ENCODE measurements at regions of chr11 and their contacts with region 1.

Region 1: GRCh38 chr11:13343931-13344717 is 66.5 kb downstream of the BMAL1 start:
- DNase-seq: peak in 1 of 2 donors; percentile 83
- H3K4me3 ChIP-seq: no peak overlapping the region
- H3K27ac ChIP-seq: no peak overlapping the region
- H3K4me1 ChIP-seq: peaks cover 0 to 5% of the 10 kb centered on the region in 2 donors
- H3K27me3 ChIP-seq: no peaks in the 10 kb centered on the region
- CTCF ChIP-seq: peak; percentile 63 to 88 (median 80)

Region 2: DNA sequence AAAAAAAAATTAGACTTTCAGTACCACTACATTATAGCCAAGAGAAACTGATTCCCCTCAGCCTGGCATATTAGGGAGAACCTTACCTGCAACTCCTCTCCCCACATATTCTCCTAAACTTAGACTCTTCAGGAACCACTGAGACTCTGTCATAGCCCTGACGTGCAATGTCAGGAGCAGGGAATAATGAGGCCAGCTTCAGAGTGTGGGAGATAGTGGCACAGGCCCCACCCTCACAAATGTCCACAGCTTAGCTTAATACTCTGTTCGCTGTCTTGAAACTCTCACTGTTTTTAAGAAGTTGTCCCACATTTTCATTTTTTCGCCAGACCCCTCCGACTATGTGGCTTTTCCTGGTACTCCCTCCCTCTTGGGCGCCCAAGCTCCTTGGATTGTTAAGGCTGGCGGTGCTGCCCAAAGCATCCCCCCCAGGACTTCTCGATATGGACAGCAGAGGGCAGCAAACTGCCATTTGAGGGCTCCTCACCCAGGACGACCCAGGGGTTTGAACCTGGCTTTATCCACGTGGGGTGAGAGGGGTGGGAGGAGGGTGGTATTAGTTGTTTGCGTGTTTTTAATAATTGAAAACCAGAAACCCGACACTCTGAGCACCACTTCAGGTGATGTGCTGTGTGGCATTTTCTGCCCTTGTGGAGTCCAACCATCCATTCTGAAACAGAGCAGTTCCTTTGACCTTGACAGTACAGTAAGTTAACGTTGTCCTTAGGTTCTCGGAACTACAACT is 380.2 kb before region 1 on chr11:
- intact Hi-C with region 1: loop called (anchors 5 kb)
- DNase-seq: peak in 1 of 2 donors; percentile 70
- H3K4me3 ChIP-seq: no peak overlapping the region
- H3K27ac ChIP-seq: no peak overlapping the region
- H3K4me1 ChIP-seq: no peaks in the 10 kb centered on the region
- H3K27me3 ChIP-seq: no peaks in the 10 kb centered on the region
- CTCF ChIP-seq: peak; percentile 47 to 88 (median 83)

Region 3: GRCh38 chr11:13210424-13210823 is 133.7 kb before region 1 on chr11:
- intact Hi-C with region 1: loop called (anchors 1 kb)
- DNase-seq: peak in 1 of 2 donors; percentile 72
- H3K4me3 ChIP-seq: no peak overlapping the region
- H3K27ac ChIP-seq: no peak overlapping the region
- H3K4me1 ChIP-seq: no peaks in the 10 kb centered on the region
- H3K27me3 ChIP-seq: no peaks in the 10 kb centered on the region
- CTCF ChIP-seq: peak; percentile 49 to 67 (median 55)

Measured in ascending aorta (tissue), 2 donors.